ENCODE measurements at regions of chr2 and their contacts with region 1.

Region 1: GRCh38 chr2:45882707-45883602 is 231.5 kb downstream of the PRKCE start:
- DNase-seq: no peak
- ATAC-seq: peak; percentile 72

Region 2: DNA sequence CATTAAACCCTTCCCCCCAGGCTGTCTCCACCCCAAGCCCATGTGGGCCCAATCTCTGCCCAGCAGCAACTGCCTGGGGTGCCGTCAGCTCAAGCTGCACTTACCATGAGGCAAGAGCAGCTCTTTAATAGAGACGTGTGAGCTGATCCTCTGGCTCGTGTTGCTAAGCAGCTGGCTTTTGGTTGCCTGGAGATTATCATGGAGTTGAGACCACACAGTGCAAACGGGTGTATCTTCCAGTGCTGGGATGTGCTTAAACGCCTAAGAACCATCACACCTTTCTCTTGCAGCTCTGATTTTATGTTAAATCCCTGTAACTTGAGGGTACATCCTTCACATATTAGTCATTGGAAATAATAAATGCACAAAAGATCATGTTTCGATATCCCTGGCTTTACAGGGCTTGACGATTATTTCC is 39.6 kb after region 1 on chr2:
- intact Hi-C with region 1: loop called (anchors 2 kb)
- DNase-seq: peak; percentile 76
- ATAC-seq: peak; percentile 92

Measured in Right ventricle myocardium inferior (tissue), 1 donor.